Activated CD4-positive, alpha-beta memory T cell treated with anti-CD3 and anti-CD28 coated beads for 36 hours (primary cell): ENCODE measurements at regions of chr3 and their contacts with region 1.

Region 1: GRCh38 chr3:132641837-132642538 is 17.6 kb downstream of the ACAD11 start:
- DNase-seq: no peak
- H3K4me3 Mint-ChIP-seq: no peak overlapping the region
- H3K27ac Mint-ChIP-seq: no peak overlapping the region
- H3K4me1 Mint-ChIP-seq: no peaks in the 10 kb centered on the region
- H3K27me3 Mint-ChIP-seq: no peaks in the 10 kb centered on the region

Region 2: DNA sequence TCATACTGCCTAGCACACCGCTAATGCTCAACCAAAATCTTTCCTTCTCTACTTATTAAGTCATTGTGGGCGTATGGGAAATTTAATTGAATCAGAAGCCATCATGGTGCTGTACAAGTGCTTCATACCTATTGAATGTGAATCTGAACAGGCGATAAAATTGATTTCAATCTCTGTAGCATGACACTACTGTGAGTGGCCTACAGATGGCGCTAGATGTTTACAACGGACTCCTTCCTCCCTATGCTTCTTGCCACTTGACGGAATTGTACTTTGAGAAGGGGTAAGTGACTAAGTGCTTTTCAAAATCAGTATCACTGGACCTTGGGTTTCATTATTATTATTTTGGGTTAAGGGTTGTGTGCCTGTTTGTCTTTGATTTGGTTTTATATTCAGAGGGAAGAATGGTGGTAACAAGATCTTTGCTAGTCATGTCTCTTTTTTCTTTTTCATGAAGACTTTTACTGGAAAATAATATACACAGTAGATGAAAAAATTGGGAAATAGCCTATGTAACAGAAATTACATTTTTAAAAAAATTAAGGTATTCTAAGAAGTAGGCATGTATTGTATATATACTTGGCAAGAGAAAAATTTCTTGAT is 289.3 kb before region 1 on chr3:
- CTCF ChIA-PET with region 1: interaction called, 11 read pairs
- POLR2A ChIA-PET with region 1: interaction called, 3 read pairs
- intact Hi-C with region 1: loop called (anchors 1 kb)
- DNase-seq: peak; percentile 75
- H3K4me3 Mint-ChIP-seq: no peak overlapping the region
- H3K27ac Mint-ChIP-seq: no peak overlapping the region
- H3K4me1 Mint-ChIP-seq: peaks cover 3% of the 10 kb centered on the region
- H3K27me3 Mint-ChIP-seq: peaks cover 2% of the 10 kb centered on the region

Region 3: GRCh38 chr3:132530624-132531023 is 111.4 kb before region 1 on chr3:
- CTCF ChIA-PET with region 1: interaction called, 172 read pairs
- POLR2A ChIA-PET with region 1: no interaction called
- intact Hi-C with region 1: no loop called
- DNase-seq: no peak
- H3K4me3 Mint-ChIP-seq: no peak overlapping the region
- H3K27ac Mint-ChIP-seq: no peak overlapping the region
- H3K4me1 Mint-ChIP-seq: no peaks in the 10 kb centered on the region
- H3K27me3 Mint-ChIP-seq: no peaks in the 10 kb centered on the region

Region 4: GRCh38 chr3:132543036-132543739 is 98.8 kb before region 1 on chr3:
- CTCF ChIA-PET with region 1: interaction called, 172 read pairs
- POLR2A ChIA-PET with region 1: no interaction called
- intact Hi-C with region 1: no loop called
- DNase-seq: no peak
- H3K4me3 Mint-ChIP-seq: no peak overlapping the region
- H3K27ac Mint-ChIP-seq: peak overlapping the region; percentile 33
- H3K4me1 Mint-ChIP-seq: peaks cover 24% of the 10 kb centered on the region
- H3K27me3 Mint-ChIP-seq: no peaks in the 10 kb centered on the region

Region 5: GRCh38 chr3:132652640-132653270 is 10.8 kb after region 1 on chr3:
- CTCF ChIA-PET with region 1: interaction called, 14 read pairs
- POLR2A ChIA-PET with region 1: interaction called, 3 read pairs
- intact Hi-C with region 1: no loop called
- DNase-seq: no peak
- H3K4me3 Mint-ChIP-seq: no peak overlapping the region
- H3K27ac Mint-ChIP-seq: no peak overlapping the region
- H3K4me1 Mint-ChIP-seq: peaks cover 10% of the 10 kb centered on the region
- H3K27me3 Mint-ChIP-seq: no peaks in the 10 kb centered on the region

Region 6: GRCh38 chr3:132659365-132660051 is 17.5 kb after region 1 on chr3 and contains the start of gene ACAD11:
- CTCF ChIA-PET with region 1: interaction called, 10 read pairs
- POLR2A ChIA-PET with region 1: interaction called, 5 read pairs
- intact Hi-C with region 1: no loop called
- DNase-seq: peak; percentile 58
- H3K4me3 Mint-ChIP-seq: peak within 1 kb of the TSS; percentile 93
- H3K27ac Mint-ChIP-seq: peak within 1 kb of the TSS; percentile 88
- H3K4me1 Mint-ChIP-seq: peaks cover 44% of the 10 kb centered on the region
- H3K27me3 Mint-ChIP-seq: no peaks in the 10 kb centered on the region
- total RNA-seq, gene ACAD11: 11.2 to 13.8 TPM